Mammary epithelial cell (primary cell): ENCODE measurements at regions of chr2 and their contacts with region 1.

Region 1: DNA sequence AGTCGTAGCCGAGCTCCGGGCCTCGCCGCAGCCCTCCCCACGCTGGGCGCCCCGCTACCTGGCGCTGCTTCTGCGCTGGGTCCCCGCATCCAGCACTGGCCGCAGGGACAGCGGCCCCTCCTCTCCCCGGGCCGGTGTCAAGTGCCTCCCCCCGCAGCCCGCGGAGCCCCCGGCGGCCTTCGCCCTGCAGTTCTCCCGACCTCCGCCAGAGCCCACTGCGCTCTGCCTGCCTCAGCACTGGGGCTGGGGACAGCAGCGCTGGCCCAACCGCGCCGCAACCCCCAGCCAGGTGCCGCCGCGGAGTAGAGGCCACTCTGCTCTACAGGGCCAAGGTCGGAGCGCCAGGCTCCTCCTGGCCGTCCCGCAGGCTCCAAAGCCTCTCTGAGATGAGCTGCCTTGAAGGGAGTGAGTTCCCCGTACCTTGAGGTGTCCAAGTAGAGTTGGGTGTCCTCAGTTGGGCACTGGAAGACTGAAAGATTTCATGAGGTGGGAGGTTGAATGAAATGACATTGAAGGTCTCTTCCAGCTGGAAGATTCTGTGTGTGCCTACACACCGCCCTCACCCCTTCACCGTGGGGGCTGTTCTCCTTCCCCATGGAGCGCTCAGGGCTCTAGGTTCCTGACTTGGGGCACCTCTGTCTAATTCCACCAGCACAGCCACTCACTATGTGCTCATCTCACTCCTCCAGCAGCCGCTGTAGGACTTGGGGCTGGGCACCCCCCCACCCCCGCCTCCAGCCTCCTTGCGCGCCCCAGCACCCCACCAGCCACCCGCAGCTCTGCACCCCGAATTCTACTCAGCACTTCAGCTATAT is 854 bp upstream of the DNMT3A start:
- DNase-seq: peak; percentile 65
- H3K4me3 ChIP-seq: peak overlapping the region; percentile 61 to 62 (median 62)
- H3K27ac ChIP-seq: no peak overlapping the region
- H3K4me1 ChIP-seq: peaks cover 15% of the 10 kb centered on the region
- H3K27me3 ChIP-seq: no peaks in the 10 kb centered on the region
- CTCF ChIP-seq: peak; percentile 71 to 92

Region 2: DNA sequence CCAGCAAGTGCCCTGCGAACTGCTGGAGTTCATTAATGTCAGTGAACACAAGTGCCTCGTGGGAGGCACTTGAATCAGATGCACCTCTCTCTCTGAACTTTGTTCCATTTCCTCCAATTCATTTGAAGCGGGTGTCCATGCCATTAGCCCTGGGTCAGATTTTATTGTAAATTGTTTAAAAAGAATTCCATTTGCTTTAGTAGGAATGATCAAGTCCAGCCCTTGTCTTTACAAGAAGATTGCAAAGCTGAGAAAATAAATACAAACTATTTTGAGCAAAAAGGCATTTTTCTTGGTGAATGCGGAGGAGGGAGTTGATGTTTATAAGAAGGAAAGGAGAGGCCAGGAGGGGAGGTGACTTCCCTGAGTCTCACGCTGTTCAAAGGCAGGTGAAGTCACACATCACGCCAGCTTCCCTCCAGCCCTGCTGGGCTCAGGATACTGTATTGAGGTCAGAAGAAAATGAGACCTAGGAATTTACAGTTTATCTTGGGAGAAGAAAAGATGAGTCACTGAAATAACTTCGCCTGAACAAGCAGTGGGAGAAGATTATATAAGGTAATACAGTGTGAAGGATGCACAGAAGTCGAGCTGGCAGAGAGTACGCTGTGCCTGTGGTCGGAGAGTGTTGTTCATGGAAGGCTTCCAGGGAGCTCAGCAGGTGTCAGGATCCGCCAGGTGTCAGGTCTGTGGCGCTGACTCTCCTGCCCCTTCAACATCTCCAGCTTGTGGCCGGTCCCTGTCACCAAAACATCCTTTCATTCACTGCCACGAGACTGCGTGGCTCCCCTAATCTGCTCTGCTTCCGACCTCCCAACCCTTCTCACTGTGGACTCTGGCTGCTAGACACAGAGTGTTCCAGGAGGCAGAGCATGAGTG is 264.2 kb before region 1 on chr2:
- CTCF ChIA-PET with region 1: no interaction called
- dilution Hi-C with region 1: no loop called
- in situ Hi-C with region 1: no loop called
- intact Hi-C with region 1: no loop called
- DNase-seq: peak; percentile 90
- H3K4me3 ChIP-seq: no peak overlapping the region
- H3K27ac ChIP-seq: no peak overlapping the region
- H3K4me1 ChIP-seq: no peaks in the 10 kb centered on the region
- H3K27me3 ChIP-seq: peaks cover 49% of the 10 kb centered on the region
- CTCF ChIP-seq: peak in 1 of 2 donors; percentile 16

Region 3: GRCh38 chr2:25301453-25302352 is 40.9 kb before region 1 on chr2:
- CTCF ChIA-PET with region 1: no interaction called
- dilution Hi-C with region 1: no loop called
- in situ Hi-C with region 1: no loop called
- intact Hi-C with region 1: loop called (anchors 2 kb)
- DNase-seq: peak; percentile 96
- H3K4me3 ChIP-seq: no peak overlapping the region
- H3K27ac ChIP-seq: no peak overlapping the region
- H3K4me1 ChIP-seq: peaks cover 23% of the 10 kb centered on the region
- H3K27me3 ChIP-seq: no peaks in the 10 kb centered on the region
- CTCF ChIP-seq: no peak

Region 4: GRCh38 chr2:25521665-25522387 is 179.2 kb after region 1 on chr2:
- CTCF ChIA-PET with region 1: no interaction called
- dilution Hi-C with region 1: no loop called
- in situ Hi-C with region 1: no loop called
- intact Hi-C with region 1: loop called (anchors 1 kb)
- DNase-seq: peak; percentile 49
- H3K4me3 ChIP-seq: no peak overlapping the region
- H3K27ac ChIP-seq: no peak overlapping the region
- H3K4me1 ChIP-seq: no peaks in the 10 kb centered on the region
- H3K27me3 ChIP-seq: no peaks in the 10 kb centered on the region
- CTCF ChIP-seq: peak; percentile 81 to 86

Region 5: DNA sequence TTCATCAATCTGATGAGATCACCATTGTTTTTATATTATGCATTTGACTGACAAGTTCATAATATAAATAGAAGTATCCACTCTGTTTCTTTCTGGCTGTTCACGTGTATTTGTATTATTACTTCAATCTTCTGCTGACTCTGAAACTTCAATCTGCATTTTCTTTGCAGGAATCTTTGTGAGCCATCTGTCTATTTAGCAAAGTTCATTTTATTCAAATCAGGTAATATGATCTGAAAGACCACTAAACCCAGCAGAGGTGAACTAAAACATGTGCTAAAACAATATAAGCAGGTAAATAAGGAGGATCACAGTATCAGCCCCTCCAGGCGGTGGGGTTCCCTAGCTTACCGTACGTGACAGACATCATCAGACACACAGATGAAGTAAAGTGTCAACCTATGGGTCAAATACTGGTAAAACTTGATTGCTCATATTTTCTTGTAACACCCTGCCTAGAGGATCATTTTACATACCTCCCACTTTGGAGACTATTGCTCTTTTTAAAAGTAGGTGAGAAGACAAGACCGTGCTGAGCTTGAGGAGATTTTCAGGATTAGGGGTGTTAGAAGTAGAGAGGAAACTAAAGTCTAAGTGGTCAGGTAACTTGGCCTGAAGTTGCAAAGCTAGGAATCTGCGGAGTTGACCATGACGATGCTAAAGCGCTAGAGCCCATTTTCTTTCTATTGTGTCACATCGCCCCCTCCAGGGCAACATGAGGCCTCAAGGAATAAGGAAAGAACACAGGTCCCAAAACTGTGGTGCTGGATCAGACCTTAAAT is 321.8 kb after region 1 on chr2:
- CTCF ChIA-PET with region 1: no interaction called
- dilution Hi-C with region 1: no loop called
- in situ Hi-C with region 1: no loop called
- intact Hi-C with region 1: loop called (anchors 10 kb)
- DNase-seq: peak; percentile 72
- H3K4me3 ChIP-seq: no peak overlapping the region
- H3K27ac ChIP-seq: peak overlapping the region; percentile 47
- H3K4me1 ChIP-seq: peaks cover 14% of the 10 kb centered on the region
- H3K27me3 ChIP-seq: no peaks in the 10 kb centered on the region
- CTCF ChIP-seq: peak; percentile 63 to 66

Region 6: DNA sequence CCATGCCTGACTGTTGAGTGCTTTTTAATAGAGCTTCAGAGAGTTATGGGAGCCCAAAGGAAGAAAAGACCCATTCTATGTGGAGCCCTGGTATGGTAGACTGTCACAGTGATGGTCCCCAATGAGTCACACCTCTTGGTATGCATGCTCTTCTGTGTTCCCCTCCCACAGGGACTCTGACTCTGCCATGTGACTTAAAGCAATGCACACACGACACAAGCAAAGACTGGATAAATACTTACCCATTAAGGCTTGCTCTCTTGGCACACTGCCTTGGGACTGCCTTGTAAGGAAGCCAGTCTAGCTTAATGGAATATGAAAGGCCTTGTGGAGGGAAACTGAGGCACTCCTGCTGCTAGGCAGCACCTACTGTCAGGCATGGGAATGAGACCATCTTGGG is 347.5 kb after region 1 on chr2:
- CTCF ChIA-PET with region 1: no interaction called
- dilution Hi-C with region 1: no loop called
- in situ Hi-C with region 1: no loop called
- intact Hi-C with region 1: no loop called
- DNase-seq: no peak
- H3K4me3 ChIP-seq: no peak overlapping the region
- H3K27ac ChIP-seq: no peak overlapping the region
- H3K4me1 ChIP-seq: peaks cover 6% of the 10 kb centered on the region
- H3K27me3 ChIP-seq: no peaks in the 10 kb centered on the region
- CTCF ChIP-seq: no peak